GM12878 (cell line): ENCODE measurements at regions of chr9 and their contacts with region 1.

Region 1: GRCh38 chr9:32589083-32589723 is 16.2 kb upstream of the NDUFB6 start:
- DNase-seq: no peak
- ATAC-seq: peak; percentile 88
- H3K4me3 ChIP-seq: no peak overlapping the region
- H3K27ac ChIP-seq: no peak overlapping the region
- H3K4me1 ChIP-seq: no peaks in the 10 kb centered on the region
- H3K27me3 ChIP-seq: no peaks in the 10 kb centered on the region
- CTCF ChIP-seq: peak; percentile 39 to 56 (median 56); a peak in 5 of 6 replicates
- EP300 ChIP-seq: no peak
- POLR2A ChIP-seq: no peak
- RAD21 ChIP-seq: peak; percentile 65

Region 2: DNA sequence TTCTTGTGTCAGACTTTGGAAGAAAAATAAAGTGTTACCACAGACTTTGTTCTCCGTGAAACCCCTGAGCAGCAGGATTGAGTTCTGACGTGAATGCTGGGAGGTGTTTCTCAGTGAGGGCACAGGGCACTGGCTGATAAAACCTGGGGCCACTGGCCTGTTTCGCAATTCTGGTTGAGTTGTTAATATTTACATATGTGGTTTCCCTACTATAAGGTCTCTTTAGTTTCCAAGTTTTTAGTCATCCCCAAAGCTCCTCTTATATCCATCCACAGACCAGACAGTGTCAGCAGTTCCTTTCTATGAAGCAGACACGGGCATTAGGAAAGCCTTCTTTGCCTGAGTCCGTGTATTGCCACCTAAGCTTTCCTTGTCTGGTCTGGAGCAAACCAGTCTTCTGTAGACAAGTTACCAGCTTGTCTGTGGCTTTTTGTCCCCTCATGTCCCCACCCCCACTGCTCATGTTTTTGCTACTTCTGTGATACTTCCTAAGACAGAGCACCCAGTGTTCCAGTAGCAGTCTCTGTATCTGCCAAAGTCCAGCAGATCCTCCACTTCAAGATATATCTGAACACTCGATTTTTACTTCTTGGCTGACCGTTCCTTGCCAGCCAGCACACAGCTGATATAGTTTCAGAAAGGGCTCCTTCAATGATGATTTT is 162.8 kb before region 1 on chr9:
- CTCF ChIA-PET with region 1: no interaction called
- POLR2A ChIA-PET with region 1: no interaction called
- RAD21 ChIA-PET with region 1: no interaction called
- SMC1A ChIA-PET with region 1: no interaction called
- in situ Hi-C with region 1: no loop called
- intact Hi-C with region 1: no loop called
- DNase-seq: no peak
- ATAC-seq: no peak
- H3K4me3 ChIP-seq: no peak overlapping the region
- H3K27ac ChIP-seq: no peak overlapping the region
- H3K4me1 ChIP-seq: no peaks in the 10 kb centered on the region
- H3K27me3 ChIP-seq: no peaks in the 10 kb centered on the region
- CTCF ChIP-seq: no peak
- EP300 ChIP-seq: no peak
- POLR2A ChIP-seq: no peak
- RAD21 ChIP-seq: no peak

Region 3: DNA sequence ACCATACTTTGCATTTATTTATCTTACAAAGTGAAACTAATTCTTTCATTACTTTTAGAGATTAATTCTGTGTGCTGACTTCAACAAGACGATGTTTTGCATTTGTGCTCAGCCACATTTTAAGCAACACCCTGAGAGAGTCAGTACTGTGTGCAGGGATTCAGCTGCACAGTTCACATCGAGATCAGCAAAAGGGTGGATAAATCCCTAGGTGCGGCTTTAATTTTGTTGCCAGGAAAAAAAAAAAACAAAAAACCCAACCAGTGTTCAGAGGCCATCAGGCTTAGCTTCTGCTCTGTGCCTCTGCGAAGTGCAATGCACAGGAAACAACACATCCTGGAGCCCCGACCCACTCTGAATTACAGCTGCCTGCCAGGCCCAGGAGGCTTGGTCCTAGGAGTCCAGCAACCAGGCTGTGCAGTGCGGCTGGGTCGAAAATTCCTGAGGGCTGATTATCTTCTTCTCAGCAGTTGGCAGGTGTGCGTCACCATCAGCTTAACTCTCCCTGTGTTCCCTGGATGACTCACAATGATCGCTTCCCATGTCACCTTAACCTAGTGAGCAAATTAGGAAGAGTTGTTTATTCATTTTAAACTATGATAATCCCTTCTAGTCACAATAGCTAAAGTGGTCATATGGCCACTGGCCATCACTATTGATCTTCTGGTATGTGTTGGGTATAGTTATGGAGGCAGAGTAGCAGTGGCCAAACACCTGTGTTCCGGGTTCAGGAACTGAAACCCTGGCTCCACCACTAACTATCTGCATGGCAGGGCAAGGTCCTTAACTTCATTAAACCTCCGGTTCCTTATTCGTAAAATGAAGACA is 14.9 kb after region 1 on chr9:
- CTCF ChIA-PET with region 1: interaction called, 21 read pairs
- POLR2A ChIA-PET with region 1: no interaction called
- RAD21 ChIA-PET with region 1: no interaction called
- SMC1A ChIA-PET with region 1: no interaction called
- in situ Hi-C with region 1: no loop called
- intact Hi-C with region 1: no loop called
- DNase-seq: no peak
- ATAC-seq: peak; percentile 79
- H3K4me3 ChIP-seq: no peak overlapping the region
- H3K27ac ChIP-seq: no peak overlapping the region
- H3K4me1 ChIP-seq: peaks cover 3% of the 10 kb centered on the region
- H3K27me3 ChIP-seq: no peaks in the 10 kb centered on the region; a peak in 1 of 4 replicates
- CTCF ChIP-seq: no peak
- EP300 ChIP-seq: no peak
- POLR2A ChIP-seq: no peak
- RAD21 ChIP-seq: no peak

Region 4: DNA sequence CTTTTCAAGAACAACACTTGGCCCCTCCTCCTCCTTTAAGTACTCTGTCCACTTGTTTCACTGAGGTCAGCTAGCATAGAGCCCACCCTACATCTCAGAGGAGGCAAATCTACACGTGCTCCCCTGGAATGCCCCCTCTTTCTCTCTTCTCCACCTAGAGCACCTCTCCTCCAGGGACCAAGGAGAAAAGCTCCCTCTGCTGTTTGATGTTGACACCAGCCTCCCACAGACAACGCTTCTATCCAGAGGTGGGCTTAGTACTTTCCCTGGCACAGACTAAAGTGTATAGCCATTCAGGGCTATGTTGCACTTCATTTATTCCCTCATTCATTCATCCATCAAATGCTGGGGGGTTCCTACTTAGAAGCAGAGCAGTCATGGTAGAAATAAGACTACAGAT is 114.4 kb after region 1 on chr9:
- CTCF ChIA-PET with region 1: interaction called, 4 read pairs
- POLR2A ChIA-PET with region 1: no interaction called
- RAD21 ChIA-PET with region 1: interaction called, 3 read pairs
- SMC1A ChIA-PET with region 1: interaction called, 5 read pairs
- in situ Hi-C with region 1: no loop called
- intact Hi-C with region 1: loop called (anchors 5 kb)
- DNase-seq: no peak
- ATAC-seq: peak; percentile 31; the same call in 1 of the 3 replicates
- H3K4me3 ChIP-seq: no peak overlapping the region
- H3K27ac ChIP-seq: no peak overlapping the region
- H3K4me1 ChIP-seq: no peaks in the 10 kb centered on the region
- H3K27me3 ChIP-seq: no peaks in the 10 kb centered on the region; a peak in 1 of 4 replicates
- CTCF ChIP-seq: peak in 2 of 3 experiments; percentile 14 to 24; a peak in 2 of 6 replicates
- EP300 ChIP-seq: no peak
- POLR2A ChIP-seq: no peak
- RAD21 ChIP-seq: peak; percentile 29; the same call in 1 of the 2 replicates

Region 5: DNA sequence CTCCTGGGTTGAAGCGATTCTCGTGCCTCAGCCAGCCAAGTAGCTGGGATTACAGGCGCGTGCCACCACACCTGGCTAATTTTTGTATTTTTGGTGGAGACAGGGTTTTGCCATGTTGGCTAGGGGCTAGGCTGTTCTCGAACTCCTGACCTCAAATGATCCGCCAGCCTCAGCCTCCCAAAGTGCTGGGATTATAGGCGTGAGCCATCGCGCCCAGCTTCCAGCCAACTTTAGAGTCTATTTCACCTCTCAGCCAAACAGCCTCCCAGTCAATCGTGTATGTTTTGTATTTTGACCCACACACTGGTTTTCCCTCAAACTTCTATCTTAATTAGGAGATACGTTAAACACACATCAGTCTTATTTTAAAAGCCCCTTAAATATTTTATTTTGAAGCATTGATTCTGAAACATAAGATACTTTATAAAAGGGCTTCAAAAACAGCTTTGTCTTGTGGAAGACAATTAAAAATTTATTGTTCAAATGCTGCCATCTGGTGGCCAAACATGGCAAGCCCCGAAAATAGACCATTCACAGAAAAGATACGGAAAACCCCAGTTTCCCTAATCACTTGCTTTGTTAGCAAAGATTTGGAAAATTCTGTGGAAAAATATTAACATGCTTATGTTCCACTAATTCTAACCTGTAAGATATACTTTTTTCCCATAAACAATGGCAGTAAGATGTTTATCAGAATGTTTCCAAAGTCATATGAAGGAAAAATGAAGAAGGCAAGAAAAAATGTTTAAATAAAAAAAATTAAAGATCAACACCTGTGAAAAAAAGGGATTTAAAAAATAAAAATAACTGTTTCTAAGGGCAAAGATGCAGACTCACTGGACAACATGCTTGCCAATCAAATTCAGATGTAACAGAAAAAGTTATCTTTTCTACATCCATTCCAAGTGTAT is 379.2 kb after region 1 on chr9:
- CTCF ChIA-PET with region 1: interaction called, 111 read pairs
- POLR2A ChIA-PET with region 1: interaction called, 5 read pairs
- RAD21 ChIA-PET with region 1: interaction called, 44 read pairs
- SMC1A ChIA-PET with region 1: interaction called, 41 read pairs
- in situ Hi-C with region 1: no loop called
- intact Hi-C with region 1: loop called (anchors 2 kb)
- DNase-seq: no peak
- ATAC-seq: peak; percentile 61
- H3K4me3 ChIP-seq: no peak overlapping the region
- H3K27ac ChIP-seq: no peak overlapping the region
- H3K4me1 ChIP-seq: no peaks in the 10 kb centered on the region
- H3K27me3 ChIP-seq: no peaks in the 10 kb centered on the region
- CTCF ChIP-seq: peak; percentile 61 to 73 (median 72)
- EP300 ChIP-seq: no peak
- POLR2A ChIP-seq: no peak
- RAD21 ChIP-seq: peak; percentile 75